ENCODE measurements at regions of chr3 and their contacts with region 1.

Region 1: GRCh38 chr3:98602078-98602678 is 8.8 kb upstream of the CPOX start:
- DNase-seq: peak; percentile 77
- H3K4me3 ChIP-seq: no peak overlapping the region
- H3K27ac ChIP-seq: no peak overlapping the region
- H3K4me1 ChIP-seq: no peaks in the 10 kb centered on the region
- H3K27me3 ChIP-seq: no peaks in the 10 kb centered on the region
- CTCF ChIP-seq: peak; percentile 81

Region 2: GRCh38 chr3:98730338-98730737 is 128.2 kb after region 1 on chr3:
- CTCF ChIA-PET with region 1: no interaction called
- POLR2A ChIA-PET with region 1: no interaction called
- intact Hi-C with region 1: no loop called
- DNase-seq: no peak
- H3K4me3 ChIP-seq: no peak overlapping the region
- H3K27ac ChIP-seq: no peak overlapping the region
- H3K4me1 ChIP-seq: no peaks in the 10 kb centered on the region
- H3K27me3 ChIP-seq: no peaks in the 10 kb centered on the region
- CTCF ChIP-seq: no peak

Region 3: GRCh38 chr3:98809557-98809956 is 207.4 kb after region 1 on chr3:
- CTCF ChIA-PET with region 1: interaction called, 9 read pairs
- POLR2A ChIA-PET with region 1: no interaction called
- intact Hi-C with region 1: loop called (anchors 1 kb)
- DNase-seq: no peak
- H3K4me3 ChIP-seq: no peak overlapping the region
- H3K27ac ChIP-seq: no peak overlapping the region
- H3K4me1 ChIP-seq: no peaks in the 10 kb centered on the region
- H3K27me3 ChIP-seq: no peaks in the 10 kb centered on the region
- CTCF ChIP-seq: no peak